ENCODE measurements at regions of chr2 and their contacts with region 1.

Region 1: DNA sequence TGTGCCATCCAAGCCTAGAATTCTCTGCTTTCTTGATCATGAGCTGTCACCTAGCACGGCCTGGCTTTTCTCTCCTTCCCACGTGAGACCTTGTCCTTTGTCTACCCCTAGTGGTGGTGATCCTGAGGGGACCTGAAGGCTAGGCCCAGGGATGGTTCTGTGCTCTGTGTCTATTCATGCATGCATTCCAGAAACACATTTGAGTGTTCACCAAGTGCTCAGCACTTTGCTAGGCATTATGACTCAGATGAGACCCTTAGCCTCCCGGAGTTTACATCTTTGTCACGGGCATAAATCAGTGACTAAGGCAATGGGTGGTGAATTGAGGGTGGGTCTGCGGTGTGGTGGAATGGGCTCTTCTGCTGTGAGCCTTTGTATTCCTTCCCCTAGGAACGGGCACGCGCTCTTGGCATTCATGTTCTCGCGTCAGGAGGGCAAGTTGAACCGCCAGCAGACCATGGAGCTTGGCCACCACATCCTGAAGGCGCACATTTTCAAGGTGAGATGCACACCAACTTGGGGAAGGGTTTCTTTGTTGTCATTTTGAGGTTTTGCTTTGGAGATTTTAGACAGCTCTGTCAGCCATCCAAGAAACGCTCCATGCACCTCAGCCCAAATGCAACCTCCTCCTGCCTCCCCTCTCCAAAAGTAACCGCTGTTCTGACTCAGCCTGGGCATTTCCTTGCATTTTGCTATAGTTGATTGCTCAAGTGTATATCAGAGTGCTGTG is 100.9 kb downstream of the WDSUB1 start:
- DNase-seq: peak in 4 of 14 experiments; percentile 35 to 43 (median 36)
- ATAC-seq: no peak
- H3K4me3 ChIP-seq: no peak overlapping the region
- H3K4me3 Mint-ChIP-seq: no peak overlapping the region
- H3K27ac ChIP-seq: no peak overlapping the region
- H3K27ac Mint-ChIP-seq: no peak overlapping the region
- H3K4me1 ChIP-seq: peaks cover 3% of the 10 kb centered on the region
- H3K4me1 Mint-ChIP-seq: peaks cover 4% of the 10 kb centered on the region
- H3K27me3 ChIP-seq: no peaks in the 10 kb centered on the region
- H3K27me3 Mint-ChIP-seq: no peaks in the 10 kb centered on the region
- CTCF ChIP-seq: no peak

Region 2: GRCh38 chr2:158671360-158672245 is 514.0 kb before region 1 on chr2:
- CTCF ChIA-PET with region 1: no interaction called
- POLR2A ChIA-PET with region 1: no interaction called
- intact Hi-C with region 1: no loop called
- DNase-seq: no peak
- ATAC-seq: no peak
- H3K4me3 ChIP-seq: no peak overlapping the region
- H3K4me3 Mint-ChIP-seq: no peak overlapping the region
- H3K27ac ChIP-seq: no peak overlapping the region
- H3K27ac Mint-ChIP-seq: no peak overlapping the region
- H3K4me1 ChIP-seq: no peaks in the 10 kb centered on the region
- H3K4me1 Mint-ChIP-seq: no peaks in the 10 kb centered on the region
- H3K27me3 ChIP-seq: no peaks in the 10 kb centered on the region
- H3K27me3 Mint-ChIP-seq: no peaks in the 10 kb centered on the region
- CTCF ChIP-seq: no peak

Region 3: DNA sequence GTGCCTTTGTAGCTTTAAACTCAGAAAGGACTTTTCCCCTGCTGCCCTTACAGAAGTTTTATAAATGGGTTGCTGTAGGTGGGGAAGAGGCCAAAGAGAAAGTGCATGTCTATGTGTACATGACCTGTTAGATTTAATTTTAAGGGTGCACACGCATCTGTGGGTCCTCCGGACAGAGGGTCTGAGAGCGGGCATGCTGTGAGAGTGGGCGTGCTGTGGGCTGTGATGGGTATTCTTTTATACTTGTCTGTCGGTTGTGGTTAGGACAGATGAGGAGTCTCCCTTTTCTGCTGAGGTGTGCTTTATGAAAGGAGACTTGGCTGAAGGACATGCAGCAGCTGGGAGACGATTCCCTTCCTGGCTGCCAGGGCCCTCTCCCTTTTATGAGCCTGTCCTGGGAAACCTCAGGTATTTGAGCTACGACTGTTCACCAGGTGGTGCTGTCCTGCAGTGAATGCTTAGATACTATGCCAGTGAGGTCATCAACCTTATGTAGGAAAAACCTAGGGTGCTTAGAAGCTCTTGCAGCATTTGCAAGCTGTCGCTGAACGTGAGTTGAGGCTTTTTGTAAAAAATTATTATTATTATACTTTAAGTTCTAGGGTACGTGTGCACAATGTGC is 149.7 kb before region 1 on chr2:
- CTCF ChIA-PET with region 1: no interaction called
- POLR2A ChIA-PET with region 1: no interaction called
- intact Hi-C with region 1: loop called in 1 of 2 experiments (anchors 5 kb)
- DNase-seq: peak in 5 of 14 experiments; percentile 12 to 62 (median 37)
- ATAC-seq: peak; percentile 51
- H3K4me3 ChIP-seq: no peak overlapping the region
- H3K4me3 Mint-ChIP-seq: no peak overlapping the region
- H3K27ac ChIP-seq: no peak overlapping the region
- H3K27ac Mint-ChIP-seq: no peak overlapping the region
- H3K4me1 ChIP-seq: no peaks in the 10 kb centered on the region
- H3K4me1 Mint-ChIP-seq: no peaks in the 10 kb centered on the region
- H3K27me3 ChIP-seq: no peaks in the 10 kb centered on the region
- H3K27me3 Mint-ChIP-seq: no peaks in the 10 kb centered on the region
- CTCF ChIP-seq: no peak

Region 4: DNA sequence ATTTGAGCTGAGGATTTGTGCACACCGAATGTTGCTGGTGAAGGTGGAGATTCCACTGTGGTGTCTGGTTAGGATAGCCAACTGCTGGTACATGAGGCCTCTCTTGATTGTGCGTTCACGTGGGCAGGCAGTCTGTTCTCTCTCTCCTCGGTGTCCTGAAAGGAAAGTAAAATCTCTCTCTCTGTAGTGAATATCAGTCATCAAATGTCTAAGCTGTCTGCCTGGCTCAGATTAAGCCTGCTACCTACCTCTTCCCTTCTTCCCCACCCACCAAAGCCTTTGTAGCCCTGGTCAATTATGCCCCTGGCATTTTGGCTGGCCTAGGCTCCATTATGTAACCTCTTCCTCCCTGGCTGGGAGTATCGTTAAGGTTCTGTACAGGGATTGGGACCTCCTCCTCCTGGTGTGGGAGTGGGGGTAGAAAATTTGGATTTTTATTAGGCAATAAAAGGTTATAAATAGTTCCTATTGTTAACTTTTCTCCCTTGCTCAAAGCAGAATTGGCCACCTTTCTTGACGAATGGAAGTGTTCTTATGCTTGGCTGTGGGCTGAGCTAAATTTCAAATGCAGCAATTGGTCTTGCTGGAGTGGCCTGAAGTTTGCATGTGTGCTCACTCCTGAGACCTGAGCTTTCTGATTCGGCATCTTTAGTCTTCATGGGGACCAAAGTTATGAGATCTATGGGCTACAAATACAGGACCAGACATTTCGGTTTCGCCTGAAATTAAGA is 47.9 kb before region 1 on chr2:
- CTCF ChIA-PET with region 1: no interaction called
- POLR2A ChIA-PET with region 1: interaction called, 3 read pairs
- intact Hi-C with region 1: loop called in 1 of 2 experiments (anchors 5 kb)
- DNase-seq: no peak
- ATAC-seq: no peak
- H3K4me3 ChIP-seq: no peak overlapping the region
- H3K4me3 Mint-ChIP-seq: no peak overlapping the region
- H3K27ac ChIP-seq: no peak overlapping the region
- H3K27ac Mint-ChIP-seq: no peak overlapping the region
- H3K4me1 ChIP-seq: no peaks in the 10 kb centered on the region
- H3K4me1 Mint-ChIP-seq: no peaks in the 10 kb centered on the region
- H3K27me3 ChIP-seq: no peaks in the 10 kb centered on the region
- H3K27me3 Mint-ChIP-seq: no peaks in the 10 kb centered on the region
- CTCF ChIP-seq: no peak